Mammary epithelial cell (primary cell): ENCODE measurements at regions of chr1 and their contacts with region 1.

Region 1: DNA sequence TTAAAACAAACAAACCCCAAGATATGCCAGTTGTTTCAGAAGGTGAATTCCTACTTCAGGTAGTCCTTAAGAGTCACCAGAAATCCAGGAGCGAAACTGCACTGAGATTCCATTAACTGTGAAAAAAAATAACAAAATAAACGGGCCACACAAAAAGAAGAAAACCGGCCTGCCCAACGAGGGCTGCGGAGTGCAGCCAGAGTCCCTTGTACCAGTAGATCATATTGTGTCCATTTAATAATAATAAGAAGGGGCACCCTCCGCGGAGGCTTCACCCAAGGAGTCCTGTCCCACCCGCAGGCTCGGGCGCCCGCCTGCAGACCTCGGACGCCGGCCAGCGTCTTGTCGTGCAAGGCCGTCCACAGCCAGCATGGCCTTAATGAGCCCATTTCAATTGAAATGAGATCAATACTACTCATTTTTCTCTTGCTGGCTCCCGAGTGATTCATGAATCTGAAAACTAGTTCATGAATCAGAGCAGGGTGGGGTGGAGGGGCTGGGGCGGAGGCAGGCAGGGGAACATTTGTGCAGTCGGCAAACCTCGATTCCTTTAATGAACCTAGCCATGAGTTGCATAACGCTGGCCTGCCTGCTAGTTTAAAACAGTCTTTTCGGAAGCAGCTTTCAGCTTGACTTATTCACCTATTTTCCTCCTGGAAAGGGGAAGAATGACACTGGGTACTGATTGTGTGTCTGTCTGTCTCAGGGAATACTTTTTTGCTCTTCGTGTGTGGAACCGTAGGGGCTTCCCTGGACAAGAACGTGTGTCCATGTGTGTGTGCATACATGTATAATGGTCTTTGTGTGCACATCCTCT is 113.1 kb upstream of the IRF2BP2 start:
- DNase-seq: peak; percentile 94
- H3K4me3 ChIP-seq: peak overlapping the region; percentile 12 to 29 (median 19)
- H3K27ac ChIP-seq: peak overlapping the region; percentile 93
- H3K4me1 ChIP-seq: peaks cover 67% of the 10 kb centered on the region
- H3K27me3 ChIP-seq: no peaks in the 10 kb centered on the region
- CTCF ChIP-seq: no peak

Region 2: GRCh38 chr1:234544087-234544579 is 179.0 kb before region 1 on chr1:
- CTCF ChIA-PET with region 1: no interaction called
- dilution Hi-C with region 1: no loop called
- in situ Hi-C with region 1: no loop called
- intact Hi-C with region 1: loop called (anchors 5 kb)
- DNase-seq: peak; percentile 77
- H3K4me3 ChIP-seq: no peak overlapping the region
- H3K27ac ChIP-seq: no peak overlapping the region
- H3K4me1 ChIP-seq: peaks cover 29% of the 10 kb centered on the region
- H3K27me3 ChIP-seq: no peaks in the 10 kb centered on the region
- CTCF ChIP-seq: no peak

Region 3: DNA sequence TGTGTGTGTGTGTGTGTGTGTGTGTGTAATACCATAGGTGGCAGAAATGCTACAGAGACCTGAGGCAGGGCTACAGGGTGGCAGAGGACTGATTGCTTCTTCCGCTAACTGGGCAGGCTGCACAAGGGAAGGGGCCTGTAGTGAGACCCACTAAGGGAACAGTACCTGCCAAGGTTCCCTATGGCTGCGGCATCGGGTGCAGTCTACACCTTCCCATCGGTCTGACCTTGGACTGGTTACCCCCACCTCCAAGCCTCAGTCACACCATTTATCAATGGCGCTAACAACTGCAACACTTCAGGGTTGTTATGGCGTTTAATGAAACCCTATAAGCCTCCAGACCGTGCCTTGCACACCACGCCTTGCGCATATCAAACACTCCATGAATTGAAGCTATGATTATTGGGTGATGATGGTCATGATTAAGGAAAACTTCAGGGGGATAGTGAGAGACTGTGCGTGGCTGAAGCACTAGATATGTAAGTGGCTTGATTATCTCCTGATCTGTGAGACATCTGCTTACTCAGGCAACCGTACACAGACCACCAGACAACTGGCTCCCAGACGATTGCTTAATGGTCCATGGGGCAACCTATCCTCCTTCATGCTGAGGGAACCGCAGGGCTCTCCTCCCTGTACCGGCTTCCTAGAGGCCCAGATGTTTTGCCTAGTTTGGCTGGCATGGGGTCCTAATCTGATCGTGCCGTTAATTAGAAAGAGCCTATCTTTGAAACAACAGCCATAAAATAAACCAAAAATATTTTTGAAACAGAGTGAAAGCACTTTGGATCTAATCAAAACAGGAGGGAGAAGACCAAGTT is 164.9 kb before region 1 on chr1:
- CTCF ChIA-PET with region 1: no interaction called
- dilution Hi-C with region 1: no loop called
- in situ Hi-C with region 1: no loop called
- intact Hi-C with region 1: no loop called
- DNase-seq: no peak
- H3K4me3 ChIP-seq: no peak overlapping the region
- H3K27ac ChIP-seq: no peak overlapping the region
- H3K4me1 ChIP-seq: no peaks in the 10 kb centered on the region
- H3K27me3 ChIP-seq: no peaks in the 10 kb centered on the region
- CTCF ChIP-seq: no peak

Region 4: DNA sequence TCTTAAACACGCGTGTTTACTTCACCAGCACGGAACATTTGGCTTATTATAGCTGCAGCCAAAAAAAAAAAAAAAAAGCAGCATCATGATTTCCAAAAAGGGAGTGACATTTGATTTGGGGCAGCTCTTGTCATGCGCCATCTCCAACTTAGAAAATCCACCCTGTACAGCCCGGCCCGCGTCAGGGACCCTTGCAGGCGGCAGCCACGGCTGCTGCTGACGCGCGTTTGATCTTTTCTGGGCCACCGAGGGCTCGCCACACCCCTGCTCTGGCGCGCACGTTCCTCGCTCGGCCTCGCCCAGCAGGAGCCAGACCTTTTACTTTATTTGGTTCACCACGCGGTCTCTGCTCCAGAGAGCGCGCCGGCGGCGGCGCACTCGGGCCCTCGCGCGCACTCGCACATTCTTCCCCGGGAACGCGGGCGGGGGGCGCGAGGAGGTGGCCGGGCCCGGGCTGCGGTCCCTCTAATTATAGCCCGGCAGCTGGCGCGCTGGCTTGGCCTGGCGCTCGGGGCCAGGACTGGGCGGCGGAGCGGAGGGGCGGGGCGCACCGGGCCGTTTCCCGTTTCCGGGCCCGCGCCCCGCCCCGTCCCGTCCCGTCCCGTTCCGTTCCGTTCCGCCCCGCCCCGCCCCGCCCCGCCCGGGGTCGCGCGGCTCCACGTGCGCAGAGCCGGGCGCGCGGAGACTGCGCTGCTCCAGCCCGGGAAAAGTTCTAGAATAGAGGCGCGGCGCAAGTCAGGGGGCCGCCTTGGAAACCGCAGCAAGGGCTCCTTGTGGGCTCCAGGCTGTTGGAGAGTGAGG is 123.3 kb before region 1 on chr1:
- CTCF ChIA-PET with region 1: interaction called, 4 read pairs
- dilution Hi-C with region 1: no loop called
- in situ Hi-C with region 1: loop called in 1 of 2 experiments (anchors 10 kb)
- intact Hi-C with region 1: no loop called
- DNase-seq: peak; percentile 87
- H3K4me3 ChIP-seq: peak overlapping the region; percentile 53 to 60 (median 55)
- H3K27ac ChIP-seq: peak overlapping the region; percentile 88
- H3K4me1 ChIP-seq: peaks cover 42% of the 10 kb centered on the region
- H3K27me3 ChIP-seq: no peaks in the 10 kb centered on the region
- CTCF ChIP-seq: no peak

Region 5: GRCh38 chr1:234683861-234684632 is 39.1 kb before region 1 on chr1:
- CTCF ChIA-PET with region 1: no interaction called
- dilution Hi-C with region 1: no loop called
- in situ Hi-C with region 1: no loop called
- intact Hi-C with region 1: loop called (anchors 1 kb)
- DNase-seq: peak; percentile 85
- H3K4me3 ChIP-seq: no peak overlapping the region
- H3K27ac ChIP-seq: no peak overlapping the region
- H3K4me1 ChIP-seq: peaks cover 11% of the 10 kb centered on the region
- H3K27me3 ChIP-seq: no peaks in the 10 kb centered on the region
- CTCF ChIP-seq: no peak

Region 6: GRCh38 chr1:234925440-234926263 is 202.5 kb after region 1 on chr1:
- CTCF ChIA-PET with region 1: no interaction called
- dilution Hi-C with region 1: no loop called
- in situ Hi-C with region 1: no loop called
- intact Hi-C with region 1: loop called (anchors 2 kb)
- DNase-seq: peak; percentile 99
- H3K4me3 ChIP-seq: no peak overlapping the region
- H3K27ac ChIP-seq: peak overlapping the region; percentile 60
- H3K4me1 ChIP-seq: peaks cover 16% of the 10 kb centered on the region
- H3K27me3 ChIP-seq: no peaks in the 10 kb centered on the region
- CTCF ChIP-seq: no peak

Region 7: GRCh38 chr1:235011599-235012435 is 288.7 kb after region 1 on chr1:
- CTCF ChIA-PET with region 1: no interaction called
- dilution Hi-C with region 1: no loop called
- in situ Hi-C with region 1: no loop called
- intact Hi-C with region 1: loop called (anchors 2 kb)
- DNase-seq: peak; percentile 100
- H3K4me3 ChIP-seq: no peak overlapping the region
- H3K27ac ChIP-seq: peak overlapping the region; percentile 97
- H3K4me1 ChIP-seq: peaks cover 20% of the 10 kb centered on the region
- H3K27me3 ChIP-seq: no peaks in the 10 kb centered on the region
- CTCF ChIP-seq: no peak

Region 8: DNA sequence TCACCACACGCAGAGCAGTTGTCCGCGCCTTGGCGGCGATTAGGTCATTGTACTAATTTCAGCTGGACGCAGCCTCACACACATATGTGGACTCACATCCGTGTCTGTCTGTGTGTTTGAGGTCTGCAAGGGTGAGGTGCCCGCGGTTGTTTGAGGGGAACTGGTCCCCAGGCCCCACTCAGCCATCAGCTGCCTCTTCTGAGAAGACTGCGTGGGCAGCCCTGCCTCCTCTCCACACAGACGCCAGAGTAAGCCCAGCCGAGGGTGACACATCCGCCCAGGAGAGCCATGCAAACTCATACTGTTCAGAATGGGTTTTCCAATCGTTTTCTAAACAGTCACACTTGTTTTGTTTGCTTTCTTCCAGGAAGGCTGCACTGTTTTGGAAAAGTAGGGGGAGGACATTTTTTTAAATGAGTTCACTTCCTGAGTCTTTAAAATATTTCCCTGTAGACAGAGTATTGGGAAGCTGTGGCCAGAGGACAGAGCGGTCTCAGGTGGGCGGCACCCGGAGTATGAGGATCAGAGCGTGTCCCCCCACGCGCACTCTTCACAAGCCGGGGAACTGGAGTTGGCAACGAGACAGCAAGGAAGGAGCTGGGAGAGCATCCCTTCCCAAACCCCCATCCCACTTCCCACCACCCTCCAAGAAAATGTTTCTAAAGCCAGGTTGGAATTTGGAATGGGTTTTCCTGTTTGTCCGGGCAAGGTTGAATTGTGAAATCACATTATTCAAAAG is 352.2 kb after region 1 on chr1:
- CTCF ChIA-PET with region 1: no interaction called
- dilution Hi-C with region 1: no loop called
- in situ Hi-C with region 1: loop called in 1 of 2 experiments (anchors 10 kb)
- intact Hi-C with region 1: no loop called
- DNase-seq: peak; percentile 86
- H3K4me3 ChIP-seq: no peak overlapping the region
- H3K27ac ChIP-seq: peak overlapping the region; percentile 78
- H3K4me1 ChIP-seq: peaks cover 54% of the 10 kb centered on the region
- H3K27me3 ChIP-seq: no peaks in the 10 kb centered on the region
- CTCF ChIP-seq: no peak